IMR-90 (cell line): ENCODE measurements at regions of chr12 and their contacts with region 1.

Region 1: GRCh38 chr12:64273527-64274403 is 51.7 kb upstream of the KICS2 start:
- DNase-seq: no peak
- ATAC-seq: peak; percentile 67
- H3K4me3 ChIP-seq: no peak overlapping the region
- H3K27ac ChIP-seq: no peak overlapping the region
- H3K4me1 ChIP-seq: no peaks in the 10 kb centered on the region
- H3K27me3 ChIP-seq: peaks cover 5% of the 10 kb centered on the region; the same call in 1 of the 2 replicates
- CTCF ChIP-seq: peak; percentile 16; the same call in 1 of the 2 replicates
- POLR2A ChIP-seq: no peak
- RAD21 ChIP-seq: peak; percentile 30; the same call in 1 of the 2 replicates

Region 2: DNA sequence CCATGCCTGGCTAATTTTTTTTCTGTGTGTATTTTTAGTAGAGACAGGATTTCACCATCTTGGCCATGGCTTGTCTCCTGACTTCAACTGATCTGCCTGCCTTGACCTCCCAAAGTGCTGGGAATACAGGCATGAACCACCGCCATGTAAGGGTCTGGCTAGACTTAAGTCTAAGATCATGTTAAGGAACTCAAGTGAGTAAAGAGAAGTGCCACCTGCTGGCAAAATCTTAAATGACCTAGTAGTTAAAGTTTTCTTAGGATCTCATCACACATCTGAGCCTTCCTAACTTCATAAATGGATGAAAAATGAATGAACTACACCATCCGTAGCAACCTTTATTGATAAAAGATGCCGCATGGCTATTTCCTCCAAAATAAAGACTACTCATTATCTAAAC is 118.5 kb after region 1 on chr12:
- CTCF ChIA-PET with region 1: no interaction called
- POLR2A ChIA-PET with region 1: no interaction called
- dilution Hi-C with region 1: no loop called
- in situ Hi-C with region 1: no loop called
- intact Hi-C with region 1: loop called (anchors 1 kb)
- DNase-seq: peak; percentile 56
- ATAC-seq: peak; percentile 73; the same call in 1 of the 2 replicates
- H3K4me3 ChIP-seq: no peak overlapping the region
- H3K27ac ChIP-seq: no peak overlapping the region
- H3K4me1 ChIP-seq: no peaks in the 10 kb centered on the region
- H3K27me3 ChIP-seq: peaks cover 6% of the 10 kb centered on the region; the same call in 1 of the 2 replicates
- CTCF ChIP-seq: peak; percentile 52
- POLR2A ChIP-seq: no peak
- RAD21 ChIP-seq: peak; percentile 37; the same call in 1 of the 2 replicates